HEK293 (cell line): ENCODE measurements at regions of chr3 and their contacts with region 1.

Region 1: GRCh38 chr3:5026331-5027218 is 47.3 kb downstream of the BHLHE40 start:
- H3K4me3 ChIP-seq: peak overlapping the region; percentile 36
- H3K27ac ChIP-seq: peak overlapping the region; percentile 90
- H3K4me1 ChIP-seq: no peaks in the 10 kb centered on the region; the same call in 1 of the 2 replicates
- CTCF ChIP-seq: peak; percentile 82; the same call in 1 of the 2 replicates

Region 2: DNA sequence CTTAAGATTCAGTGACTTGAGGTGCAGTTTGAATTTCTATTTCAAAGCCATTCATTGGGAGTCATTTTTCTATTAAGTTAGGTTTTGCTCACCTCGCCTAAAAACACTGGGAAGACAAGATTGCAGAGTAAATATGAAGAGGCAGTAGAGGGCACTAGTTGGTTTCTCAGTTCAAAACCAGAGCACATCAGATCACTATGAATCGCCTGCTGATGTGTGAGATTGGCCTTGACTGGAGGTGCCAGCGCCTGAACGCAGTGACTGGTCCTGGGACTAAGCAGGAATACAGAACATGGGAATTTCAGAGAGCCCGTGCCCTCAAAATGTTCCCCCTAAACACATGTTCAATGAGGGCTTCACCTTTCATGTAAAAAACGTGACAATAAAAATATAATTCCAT is 304.5 kb before region 1 on chr3:
- CTCF ChIA-PET with region 1: interaction called, 20 read pairs
- POLR2A ChIA-PET with region 1: interaction called, 3 read pairs
- H3K4me3 ChIP-seq: no peak overlapping the region
- H3K27ac ChIP-seq: no peak overlapping the region
- H3K4me1 ChIP-seq: no peaks in the 10 kb centered on the region
- CTCF ChIP-seq: peak; percentile 27; the same call in 1 of the 2 replicates

Region 3: DNA sequence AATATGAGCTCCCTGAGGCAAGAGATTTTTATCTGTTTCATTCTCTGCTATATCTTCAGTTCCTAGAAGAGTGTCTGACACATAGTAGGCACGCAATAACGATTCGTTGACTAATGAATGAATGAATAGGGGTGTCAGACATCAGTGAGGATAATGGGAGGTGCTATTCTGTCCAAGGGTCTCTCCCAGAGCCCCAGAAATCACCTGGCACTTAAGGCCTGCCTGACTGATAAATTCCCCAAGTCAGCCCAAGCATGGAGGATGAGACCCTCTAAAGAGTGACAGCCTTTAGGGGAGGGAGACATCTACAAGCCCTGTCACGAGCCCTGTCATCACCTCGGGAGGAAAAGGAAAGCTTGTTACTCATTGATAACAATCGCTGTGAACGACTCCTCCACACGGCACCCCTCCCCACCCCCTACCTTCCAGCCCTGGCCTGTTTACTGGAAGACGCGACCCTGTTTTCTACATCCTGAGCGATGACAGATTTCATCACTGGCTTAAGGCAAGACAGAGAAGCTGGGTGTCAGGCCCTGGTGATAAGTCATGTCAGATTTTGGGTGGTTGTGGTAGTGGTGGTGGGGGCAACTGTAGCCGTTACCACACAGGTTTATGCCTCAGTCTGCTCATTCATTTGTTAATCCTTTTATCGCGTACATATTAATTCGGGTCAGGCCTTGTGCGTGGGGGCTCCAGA is 24.3 kb before region 1 on chr3:
- CTCF ChIA-PET with region 1: interaction called, 3 read pairs
- POLR2A ChIA-PET with region 1: interaction called, 13 read pairs
- H3K4me3 ChIP-seq: no peak overlapping the region
- H3K27ac ChIP-seq: peak overlapping the region; percentile 43
- H3K4me1 ChIP-seq: peaks cover 17% of the 10 kb centered on the region
- CTCF ChIP-seq: no peak

Region 4: GRCh38 chr3:5016218-5017161 is 10.1 kb before region 1 on chr3:
- CTCF ChIA-PET with region 1: interaction called, 11 read pairs
- POLR2A ChIA-PET with region 1: interaction called, 15 read pairs
- H3K4me3 ChIP-seq: no peak overlapping the region
- H3K27ac ChIP-seq: peak overlapping the region; percentile 39; the same call in 1 of the 2 replicates
- H3K4me1 ChIP-seq: peaks cover 20% of the 10 kb centered on the region
- CTCF ChIP-seq: no peak